Lower leg skin (tissue), 4 donors: ENCODE measurements at regions of chrX and their contacts with region 1.

Region 1: DNA sequence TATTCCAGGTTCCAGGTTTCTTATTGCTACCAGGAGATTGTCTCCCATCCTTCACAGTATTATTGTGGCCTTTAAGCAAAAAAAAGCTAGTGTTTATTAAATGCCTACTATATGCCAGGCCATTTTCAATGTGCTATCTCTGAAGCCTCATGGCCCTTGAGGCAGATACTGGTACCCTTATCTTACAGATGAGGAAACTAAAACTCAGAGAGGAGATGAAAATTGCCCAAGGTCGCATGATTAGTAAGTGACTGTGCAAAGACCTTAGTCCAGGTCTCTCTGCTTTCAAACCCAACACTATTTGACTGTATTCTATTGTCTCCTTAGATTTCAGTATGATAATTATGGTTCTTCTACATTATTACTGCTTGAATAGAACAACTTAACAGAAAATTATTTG is 717.9 kb upstream of the AMOT start:
- DNase-seq: no peak
- H3K4me3 ChIP-seq: no peak overlapping the region
- CTCF ChIP-seq: no peak
- POLR2A ChIP-seq: no peak

Region 2: DNA sequence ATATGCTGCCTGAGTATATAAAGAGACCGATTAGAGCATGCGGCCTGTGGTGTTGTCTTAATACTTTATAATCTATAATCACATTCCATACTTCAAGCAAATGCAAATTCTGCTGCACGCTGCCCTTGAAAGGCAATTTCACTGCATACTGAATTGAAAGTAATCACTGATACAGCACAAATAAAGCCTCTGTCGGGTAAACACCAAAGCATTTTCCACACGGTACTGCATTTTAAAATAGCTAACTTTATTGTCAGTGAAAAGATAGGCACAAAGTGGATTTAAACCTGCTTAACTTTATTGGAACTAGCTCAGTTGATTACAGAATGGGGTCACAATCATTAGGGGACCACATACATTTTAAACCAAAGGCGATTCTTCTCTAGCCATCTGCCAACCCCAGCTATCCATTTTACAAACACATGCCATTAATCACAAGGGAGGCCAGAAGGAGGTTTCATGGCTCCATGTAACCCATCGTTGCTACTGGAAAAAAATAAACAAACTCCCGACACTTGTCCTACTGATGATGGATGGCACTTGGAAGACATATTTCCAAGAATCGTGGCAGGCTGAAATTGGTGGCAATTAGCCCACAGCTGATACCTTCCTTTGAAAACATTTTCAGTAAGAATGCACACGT is 783.8 kb before region 1 on chrX:
- intact Hi-C with region 1: loop called (anchors 10 kb)
- DNase-seq: no peak
- H3K4me3 ChIP-seq: no peak overlapping the region
- CTCF ChIP-seq: no peak
- POLR2A ChIP-seq: no peak

Region 3: GRCh38 chrX:113529426-113530013 is 29.1 kb before region 1 on chrX:
- intact Hi-C with region 1: no loop called
- DNase-seq: no peak
- H3K4me3 ChIP-seq: no peak overlapping the region
- CTCF ChIP-seq: no peak
- POLR2A ChIP-seq: no peak

Region 4: GRCh38 chrX:113580486-113580885 is 21.9 kb after region 1 on chrX:
- intact Hi-C with region 1: no loop called
- DNase-seq: no peak
- H3K4me3 ChIP-seq: no peak overlapping the region
- CTCF ChIP-seq: no peak
- POLR2A ChIP-seq: no peak

Region 5: DNA sequence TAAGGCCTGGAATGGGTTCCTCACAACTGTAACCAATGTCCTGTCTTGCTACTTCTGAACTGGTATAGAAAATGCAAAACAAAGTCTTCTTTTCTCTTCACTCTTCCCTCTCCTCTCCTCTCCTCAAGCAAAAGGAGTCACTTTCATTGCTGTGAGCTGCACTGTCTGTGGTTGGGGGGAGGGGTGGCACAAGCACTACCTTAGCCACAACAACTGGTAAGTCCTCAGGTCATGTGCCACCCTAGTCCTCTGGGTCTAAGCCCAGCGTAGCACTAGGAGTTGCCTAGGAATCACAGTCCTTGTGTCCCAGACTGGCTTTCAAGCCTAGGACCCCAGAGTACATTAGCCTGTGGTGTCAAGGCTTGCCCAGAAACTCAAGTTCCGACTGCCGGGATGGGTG is 141.4 kb after region 1 on chrX:
- intact Hi-C with region 1: no loop called
- DNase-seq: no peak
- H3K4me3 ChIP-seq: no peak overlapping the region
- CTCF ChIP-seq: no peak
- POLR2A ChIP-seq: no peak